Activated B cell treated with CpG ODN at 0.5 μM for 24 hours (primary cell): ENCODE measurements at regions of chr17 and their contacts with region 1.

Region 1: DNA sequence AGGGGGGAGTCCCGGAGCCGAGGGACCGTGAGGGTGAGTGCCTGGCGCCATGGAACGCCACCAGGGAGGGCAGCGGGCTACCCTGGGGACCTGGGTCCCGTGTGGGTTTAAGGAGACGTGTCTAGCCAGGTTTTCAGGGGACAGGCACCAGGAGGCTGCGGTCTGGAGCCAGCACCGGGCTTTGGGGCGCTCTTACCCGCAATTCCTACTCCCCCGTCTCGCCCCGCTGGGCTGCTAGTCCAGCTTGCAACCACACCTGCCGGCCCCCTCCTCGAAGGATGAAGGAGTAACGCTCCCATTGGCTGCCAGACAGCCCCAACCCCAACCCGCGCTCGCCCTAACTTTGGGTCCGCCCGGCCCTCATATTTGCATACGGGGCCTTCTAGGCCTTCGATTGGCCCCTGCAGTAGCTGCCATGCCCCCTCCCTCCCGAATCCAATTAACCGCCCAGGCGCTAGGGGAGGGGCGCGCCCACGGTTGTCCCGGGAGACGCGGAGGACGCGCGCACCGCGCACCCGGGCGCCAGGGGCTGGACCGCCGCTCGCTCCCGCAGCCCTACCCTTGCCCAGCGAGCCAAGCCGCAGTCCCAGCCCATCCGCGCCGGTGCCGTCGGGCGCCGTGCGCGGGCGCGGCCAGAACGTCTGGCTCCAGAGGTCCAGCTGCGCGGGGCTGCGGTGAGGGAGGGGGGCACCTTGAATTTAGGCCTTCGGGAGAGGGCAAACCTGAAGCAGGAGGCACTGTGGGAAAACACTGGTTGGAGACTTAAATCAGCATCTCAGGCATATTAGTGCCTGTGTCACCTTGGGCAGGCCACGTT is at the start of gene TTLL6:
- DNase-seq: peak; percentile 57
- ATAC-seq: peak; percentile 96
- H3K4me3 Mint-ChIP-seq: peak within 1 kb of the TSS; percentile 84
- H3K27ac Mint-ChIP-seq: no peak within 1 kb of the TSS
- H3K4me1 Mint-ChIP-seq: peaks cover 18% of the 10 kb centered on the region
- H3K27me3 Mint-ChIP-seq: peaks cover 26% of the 10 kb centered on the region
- CTCF ChIP-seq: no peak
- total RNA-seq, gene TTLL6: not detected in 2 replicates

Region 2: DNA sequence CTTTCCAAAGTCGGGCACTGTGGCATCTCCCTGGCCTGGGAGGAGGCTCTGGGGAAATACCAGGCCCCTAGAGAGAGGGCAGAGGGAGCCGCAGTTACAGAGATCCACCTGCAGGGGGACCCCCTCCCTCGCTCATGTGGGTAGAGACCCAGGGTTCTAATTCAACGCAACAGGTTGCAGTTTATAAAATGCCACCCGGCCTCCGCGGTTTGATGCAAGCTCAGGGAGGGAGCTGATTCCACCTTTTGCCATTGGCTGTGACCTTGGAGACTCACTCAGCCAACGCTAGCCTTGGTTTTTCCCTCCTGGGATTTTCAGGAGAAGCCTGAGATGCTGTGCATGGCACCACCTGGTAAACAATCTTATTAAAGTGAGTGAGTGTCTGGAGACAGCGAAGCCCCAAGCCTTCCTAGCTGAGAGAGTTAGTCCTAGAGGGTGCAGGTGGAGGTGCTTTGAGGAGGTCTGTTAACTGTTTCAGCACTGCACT is 12.0 kb before region 1 on chr17:
- CTCF ChIA-PET with region 1: interaction called, 19 read pairs
- POLR2A ChIA-PET with region 1: interaction called, 5 read pairs
- intact Hi-C with region 1: loop called (anchors 1 kb)
- DNase-seq: peak; percentile 57
- ATAC-seq: peak; percentile 96
- H3K4me3 Mint-ChIP-seq: no peak overlapping the region
- H3K27ac Mint-ChIP-seq: no peak overlapping the region
- H3K4me1 Mint-ChIP-seq: peaks cover 4% of the 10 kb centered on the region
- H3K27me3 Mint-ChIP-seq: peaks cover 23% of the 10 kb centered on the region
- CTCF ChIP-seq: peak; percentile 26

Region 3: DNA sequence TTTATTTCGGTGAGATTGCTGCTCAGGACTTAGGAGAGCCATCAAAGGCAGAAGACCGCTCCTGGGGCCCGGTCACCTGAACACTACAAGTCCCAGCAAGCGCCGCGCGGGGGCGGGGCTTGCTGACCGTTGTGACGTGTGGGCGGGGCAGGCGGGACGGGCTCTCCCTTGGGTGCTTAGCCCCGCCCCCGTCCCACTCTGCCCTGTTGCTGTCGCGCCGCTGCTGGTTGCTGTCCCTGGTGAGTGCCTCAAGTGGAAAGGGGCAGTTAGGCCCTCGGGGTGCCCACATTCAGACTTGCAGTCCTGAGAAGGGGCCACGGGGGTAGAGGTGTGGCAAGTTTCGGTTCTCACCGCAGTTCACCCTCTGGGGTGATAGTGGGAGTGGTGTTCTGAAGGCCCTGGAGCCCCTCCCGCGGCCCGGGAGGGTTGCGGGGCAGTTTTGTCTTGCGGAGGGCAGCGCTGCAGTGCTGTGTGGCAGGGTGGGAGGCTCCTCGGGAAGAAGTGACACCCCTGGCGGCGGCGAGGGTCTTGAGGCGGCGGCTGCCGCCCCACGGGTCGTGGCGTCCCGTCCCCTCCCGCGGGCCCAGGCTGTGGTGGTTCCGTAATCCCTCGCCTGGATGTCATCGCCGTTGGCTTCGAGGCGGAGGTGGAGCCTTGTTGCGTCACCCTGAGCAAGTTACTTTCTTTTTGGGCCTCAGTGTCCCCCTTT is 14.0 kb after region 1 on chr17 and contains the start of gene CALCOCO2:
- CTCF ChIA-PET with region 1: interaction called, 9 read pairs
- POLR2A ChIA-PET with region 1: no interaction called
- intact Hi-C with region 1: loop called (anchors 1 kb)
- DNase-seq: peak; percentile 82
- ATAC-seq: peak; percentile 96
- H3K4me3 Mint-ChIP-seq: peak within 1 kb of the TSS; percentile 99
- H3K27ac Mint-ChIP-seq: peak within 1 kb of the TSS; percentile 99
- H3K4me1 Mint-ChIP-seq: peaks cover 42% of the 10 kb centered on the region
- H3K27me3 Mint-ChIP-seq: no peaks in the 10 kb centered on the region
- CTCF ChIP-seq: no peak
- total RNA-seq, gene CALCOCO2: 115 TPM in 2 replicates

Region 4: DNA sequence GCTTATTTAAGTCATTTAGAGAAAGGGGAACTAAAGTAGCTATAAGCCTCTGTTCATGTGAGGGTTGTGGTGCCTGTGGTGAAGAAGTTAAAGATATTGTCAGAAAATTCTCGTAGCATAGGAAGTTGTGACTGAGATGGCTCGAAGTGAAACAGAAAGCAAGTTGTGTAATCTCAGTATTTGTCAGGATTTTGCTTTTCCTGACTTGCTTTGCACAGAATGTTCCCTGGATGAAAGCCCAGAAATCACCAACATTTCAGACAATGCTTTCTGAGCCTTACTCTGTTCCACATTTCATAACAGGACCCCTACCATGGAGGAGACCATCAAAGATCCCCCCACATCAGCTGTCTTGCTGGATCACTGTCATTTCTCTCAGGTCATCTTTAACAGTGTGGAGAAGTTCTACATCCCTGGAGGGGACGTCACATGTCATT is 24.4 kb after region 1 on chr17:
- CTCF ChIA-PET with region 1: interaction called, 9 read pairs
- POLR2A ChIA-PET with region 1: interaction called, 4 read pairs
- intact Hi-C with region 1: loop called (anchors 1 kb)
- DNase-seq: no peak
- ATAC-seq: peak; percentile 97
- H3K4me3 Mint-ChIP-seq: peak overlapping the region; percentile 82
- H3K27ac Mint-ChIP-seq: peak overlapping the region; percentile 93
- H3K4me1 Mint-ChIP-seq: peaks cover 57% of the 10 kb centered on the region
- H3K27me3 Mint-ChIP-seq: no peaks in the 10 kb centered on the region
- CTCF ChIP-seq: no peak